ENCODE measurements at regions of chr13 and their contacts with region 1.

Region 1: DNA sequence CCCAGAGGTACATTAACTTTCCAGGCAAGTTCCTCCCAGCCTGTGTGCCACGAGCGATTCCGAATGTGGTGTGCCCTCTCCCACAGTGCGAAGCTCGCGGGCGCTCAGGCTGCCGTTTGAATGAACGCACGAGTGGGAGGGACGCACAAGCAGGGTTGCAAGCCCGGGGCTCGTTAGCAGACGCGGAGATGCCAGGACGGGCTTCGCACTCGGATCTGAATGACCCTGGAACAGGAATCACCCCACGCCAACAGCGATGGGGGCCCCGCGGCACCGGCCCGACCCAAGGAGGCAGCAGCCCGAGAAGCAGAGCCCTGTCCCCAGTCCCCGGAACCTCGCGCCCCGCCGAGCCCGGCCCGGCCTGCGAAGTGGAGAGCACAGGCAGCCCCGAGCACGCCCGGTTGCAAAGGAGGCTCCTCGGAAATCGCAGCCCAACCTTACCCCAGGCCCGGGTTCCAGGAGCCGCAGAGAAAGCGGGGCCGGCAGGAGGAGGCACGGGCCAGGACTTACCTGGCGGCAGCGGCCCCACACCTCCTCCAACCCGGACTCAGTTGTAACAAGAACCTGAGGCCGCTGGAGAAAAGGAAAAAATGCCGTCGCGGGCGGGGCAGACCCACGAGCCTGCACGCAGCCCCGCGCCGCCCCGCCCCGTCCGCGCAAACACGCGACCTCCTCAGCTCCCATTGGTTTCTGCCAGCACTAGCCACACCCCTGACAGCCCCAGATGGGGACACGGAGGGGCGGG is at the start of gene SLC25A30:
- DNase-seq: peak; percentile 80
- ATAC-seq: peak; percentile 96
- H3K4me3 ChIP-seq: peak within 1 kb of the TSS; percentile 72
- H3K27ac ChIP-seq: peak within 1 kb of the TSS; percentile 42
- H3K4me1 ChIP-seq: peaks cover 2% of the 10 kb centered on the region; the same call in 1 of the 2 replicates
- H3K27me3 ChIP-seq: no peaks in the 10 kb centered on the region
- CTCF ChIP-seq: no peak
- POLR2A ChIP-seq: peak; percentile 34; the same call in 1 of the 2 replicates
- RAD21 ChIP-seq: no peak
- total RNA-seq, gene SLC25A30: 15.3 and 19.4 TPM in 2 replicates

Region 2: GRCh38 chr13:44713788-44714469 is 704.0 kb before region 1 on chr13:
- CTCF ChIA-PET with region 1: no interaction called
- POLR2A ChIA-PET with region 1: no interaction called
- dilution Hi-C with region 1: no loop called
- in situ Hi-C with region 1: no loop called
- intact Hi-C with region 1: no loop called
- DNase-seq: peak; percentile 94
- ATAC-seq: peak; percentile 91
- H3K4me3 ChIP-seq: no peak overlapping the region
- H3K27ac ChIP-seq: peak overlapping the region; percentile 96
- H3K4me1 ChIP-seq: peaks cover 15% of the 10 kb centered on the region
- H3K27me3 ChIP-seq: no peaks in the 10 kb centered on the region
- CTCF ChIP-seq: no peak
- POLR2A ChIP-seq: no peak
- RAD21 ChIP-seq: peak; percentile 24; the same call in 1 of the 2 replicates

Region 3: DNA sequence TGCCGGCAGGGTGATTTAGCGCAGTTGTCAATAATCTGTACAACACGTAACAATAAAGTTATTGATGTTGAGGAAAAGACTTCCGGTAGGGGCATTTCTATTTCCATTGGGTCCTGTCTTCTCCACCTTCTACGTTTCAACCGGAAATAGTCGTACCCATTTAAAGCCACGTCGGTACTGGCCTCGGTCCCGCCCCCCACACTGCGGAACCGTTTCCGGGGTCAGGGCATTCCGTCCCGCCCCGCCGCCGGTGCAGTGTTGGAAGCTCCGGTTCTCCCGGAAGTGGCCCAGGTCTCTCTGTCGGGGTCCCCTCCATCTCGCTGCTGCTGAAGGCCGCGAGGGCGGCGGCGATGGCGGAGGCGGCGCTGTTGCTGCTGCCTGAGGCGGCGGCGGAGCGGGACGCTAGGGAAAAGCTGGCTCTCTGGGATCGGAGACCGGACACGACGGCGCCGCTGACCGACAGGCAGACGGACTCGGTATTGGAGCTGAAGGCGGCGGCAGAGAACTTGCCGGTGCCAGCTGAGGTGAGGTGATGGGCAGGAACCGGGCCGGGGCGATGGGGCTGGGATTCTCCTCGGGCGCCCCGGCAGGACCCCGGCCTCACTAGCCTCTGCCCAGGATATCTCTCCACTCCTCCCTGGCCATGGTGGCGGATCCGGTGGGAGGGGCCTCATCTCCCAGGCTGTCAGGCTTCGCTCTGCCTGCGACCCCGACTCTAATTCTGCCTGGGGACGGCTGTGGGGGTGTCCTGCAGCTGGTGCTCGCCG is 46.9 kb after region 1 on chr13 and contains the start of gene COG3:
- CTCF ChIA-PET with region 1: no interaction called
- POLR2A ChIA-PET with region 1: interaction called, 3 read pairs
- dilution Hi-C with region 1: no loop called
- in situ Hi-C with region 1: no loop called
- intact Hi-C with region 1: loop called (anchors 5 kb)
- DNase-seq: peak; percentile 97
- ATAC-seq: peak; percentile 94
- H3K4me3 ChIP-seq: peak within 1 kb of the TSS; percentile 83
- H3K27ac ChIP-seq: peak within 1 kb of the TSS; percentile 91
- H3K4me1 ChIP-seq: peaks cover 2% of the 10 kb centered on the region; the same call in 1 of the 2 replicates
- H3K27me3 ChIP-seq: no peaks in the 10 kb centered on the region
- CTCF ChIP-seq: peak; percentile 37; the same call in 1 of the 2 replicates
- POLR2A ChIP-seq: peak; percentile 90
- RAD21 ChIP-seq: no peak
- total RNA-seq, gene COG3: 31.9 and 34.2 TPM in 2 replicates

Region 4: DNA sequence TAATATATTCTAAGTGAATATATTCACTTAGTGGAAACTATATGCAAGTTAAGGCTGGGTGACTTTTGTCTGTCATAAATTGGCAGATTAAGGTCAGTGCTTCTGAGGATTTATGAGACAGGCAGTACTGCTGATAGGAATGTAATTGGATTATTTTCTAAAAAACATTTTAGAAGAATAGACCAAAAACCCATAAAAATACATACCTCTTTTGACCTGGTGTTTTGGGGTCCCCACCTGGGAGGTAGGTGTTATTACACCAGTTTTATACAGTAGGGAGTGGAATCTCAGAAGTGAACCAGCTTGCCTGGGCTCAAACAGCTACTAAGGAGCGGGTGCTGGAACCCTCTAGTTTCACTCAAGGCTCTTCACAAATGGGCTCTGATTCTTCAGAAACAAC is 72.1 kb after region 1 on chr13:
- CTCF ChIA-PET with region 1: no interaction called
- POLR2A ChIA-PET with region 1: no interaction called
- dilution Hi-C with region 1: no loop called
- in situ Hi-C with region 1: no loop called
- intact Hi-C with region 1: loop called (anchors 5 kb)
- DNase-seq: no peak
- ATAC-seq: no peak
- H3K4me3 ChIP-seq: no peak overlapping the region
- H3K27ac ChIP-seq: no peak overlapping the region
- H3K4me1 ChIP-seq: peaks cover 2% of the 10 kb centered on the region; the same call in 1 of the 2 replicates
- H3K27me3 ChIP-seq: no peaks in the 10 kb centered on the region
- CTCF ChIP-seq: no peak
- POLR2A ChIP-seq: no peak
- RAD21 ChIP-seq: no peak